Heart right ventricle (tissue), 16 donors: ENCODE measurements at regions of chrX and their contacts with region 1.

Region 1: DNA sequence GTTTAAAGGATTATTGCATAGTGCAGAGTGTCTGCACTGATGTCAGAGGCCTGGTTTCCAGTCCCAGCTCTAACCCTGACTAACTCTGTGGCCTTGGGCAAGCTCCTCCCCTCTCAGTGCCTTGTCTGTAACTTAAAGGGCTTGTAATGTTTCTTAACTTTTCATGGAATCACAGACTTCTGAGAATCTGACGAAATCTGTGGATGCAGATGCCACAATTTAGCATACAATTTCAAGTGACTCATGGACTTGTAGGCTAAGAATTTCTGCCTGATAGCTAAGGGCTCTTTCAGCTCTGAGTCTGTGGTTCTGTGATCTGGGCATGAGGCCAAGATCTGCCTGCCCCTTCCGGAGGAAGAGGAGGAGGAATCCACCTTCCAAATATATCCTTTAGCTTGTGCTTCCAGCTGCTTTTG is 236.9 kb downstream of the AR start:
- DNase-seq: peak; percentile 58 to 86
- ATAC-seq: peak; percentile 89 to 96 (median 94)
- H3K4me3 ChIP-seq: no peak overlapping the region
- H3K27ac ChIP-seq: peak overlapping the region; percentile 54 to 87 (median 78)
- H3K4me1 ChIP-seq: peaks cover 2 to 34% (median 21%) of the 10 kb centered on the region in 9 donors
- H3K27me3 ChIP-seq: no peaks in the 10 kb centered on the region
- CTCF ChIP-seq: no peak

Region 2: GRCh38 chrX:66255359-66255967 is 1525.2 kb before region 1 on chrX:
- intact Hi-C with region 1: no loop called
- DNase-seq: no peak
- ATAC-seq: no peak
- H3K4me3 ChIP-seq: no peak overlapping the region
- H3K27ac ChIP-seq: no peak overlapping the region
- H3K4me1 ChIP-seq: no peaks in the 10 kb centered on the region
- H3K27me3 ChIP-seq: peaks cover 0 to 27% (median 0%) of the 10 kb centered on the region in 7 donors
- CTCF ChIP-seq: no peak

Region 3: GRCh38 chrX:67555578-67556203 is 225.0 kb before region 1 on chrX:
- intact Hi-C with region 1: loop called in 2 of 10 experiments (anchors 10 kb)
- DNase-seq: peak in 1 of 2 donors; percentile 5
- ATAC-seq: peak in 2 of 8 donors; percentile 39 to 52
- H3K4me3 ChIP-seq: no peak overlapping the region
- H3K27ac ChIP-seq: no peak overlapping the region
- H3K4me1 ChIP-seq: peaks cover 0 to 5% (median 0%) of the 10 kb centered on the region in 9 donors
- H3K27me3 ChIP-seq: peaks cover 0 to 36% (median 0%) of the 10 kb centered on the region in 7 donors
- CTCF ChIP-seq: peak; percentile 38 to 86 (median 60)

Region 4: GRCh38 chrX:67684136-67684535 is 96.6 kb before region 1 on chrX:
- intact Hi-C with region 1: no loop called
- DNase-seq: no peak
- ATAC-seq: no peak
- H3K4me3 ChIP-seq: no peak overlapping the region
- H3K27ac ChIP-seq: no peak overlapping the region
- H3K4me1 ChIP-seq: no peaks in the 10 kb centered on the region
- H3K27me3 ChIP-seq: peaks cover 0 to 21% (median 0%) of the 10 kb centered on the region in 7 donors
- CTCF ChIP-seq: no peak

Region 5: GRCh38 chrX:67724359-67725110 is 56.2 kb before region 1 on chrX:
- intact Hi-C with region 1: loop called in 5 of 10 experiments (anchors 5 to 10 kb)
- DNase-seq: no peak
- ATAC-seq: peak in 1 of 8 donors; percentile 66
- H3K4me3 ChIP-seq: no peak overlapping the region
- H3K27ac ChIP-seq: no peak overlapping the region
- H3K4me1 ChIP-seq: peaks cover 0 to 43% (median 11%) of the 10 kb centered on the region in 9 donors
- H3K27me3 ChIP-seq: peaks cover 0 to 3% (median 0%) of the 10 kb centered on the region in 7 donors
- CTCF ChIP-seq: peak in 7 of 9 donors; percentile 10 to 46 (median 23)

Region 6: DNA sequence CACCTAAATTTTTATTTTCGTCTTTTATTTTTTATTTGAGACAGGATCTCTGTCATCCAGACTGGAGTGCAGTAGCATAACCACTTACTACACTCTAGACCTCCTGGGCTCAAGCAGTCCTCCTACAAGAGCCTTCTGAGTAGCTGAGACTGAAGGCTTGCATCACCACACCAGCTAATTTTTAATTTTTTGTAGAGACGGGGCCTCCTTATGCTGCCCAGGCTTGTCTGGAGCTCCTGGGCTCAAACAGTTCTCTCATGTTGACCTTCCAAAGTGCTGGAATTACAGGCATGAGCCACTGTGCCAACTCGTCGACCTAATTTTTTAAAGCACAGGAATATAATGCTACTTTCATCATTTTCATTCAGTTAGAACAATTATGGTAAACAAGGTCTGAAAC is 168.6 kb after region 1 on chrX:
- intact Hi-C with region 1: no loop called
- DNase-seq: no peak
- ATAC-seq: no peak
- H3K4me3 ChIP-seq: no peak overlapping the region
- H3K27ac ChIP-seq: no peak overlapping the region
- H3K4me1 ChIP-seq: no peaks in the 10 kb centered on the region
- H3K27me3 ChIP-seq: no peaks in the 10 kb centered on the region
- CTCF ChIP-seq: no peak

Region 7: GRCh38 chrX:68018681-68019111 is 238.0 kb after region 1 on chrX:
- intact Hi-C with region 1: no loop called
- DNase-seq: no peak
- ATAC-seq: no peak
- H3K4me3 ChIP-seq: no peak overlapping the region
- H3K27ac ChIP-seq: no peak overlapping the region
- H3K4me1 ChIP-seq: no peaks in the 10 kb centered on the region
- H3K27me3 ChIP-seq: no peaks in the 10 kb centered on the region
- CTCF ChIP-seq: peak in 5 of 9 donors; percentile 10 to 41 (median 26)